Naive thymus-derived CD4-positive, alpha-beta T cell (primary cell): ENCODE measurements at regions of chr12 and their contacts with region 1.

Region 1: DNA sequence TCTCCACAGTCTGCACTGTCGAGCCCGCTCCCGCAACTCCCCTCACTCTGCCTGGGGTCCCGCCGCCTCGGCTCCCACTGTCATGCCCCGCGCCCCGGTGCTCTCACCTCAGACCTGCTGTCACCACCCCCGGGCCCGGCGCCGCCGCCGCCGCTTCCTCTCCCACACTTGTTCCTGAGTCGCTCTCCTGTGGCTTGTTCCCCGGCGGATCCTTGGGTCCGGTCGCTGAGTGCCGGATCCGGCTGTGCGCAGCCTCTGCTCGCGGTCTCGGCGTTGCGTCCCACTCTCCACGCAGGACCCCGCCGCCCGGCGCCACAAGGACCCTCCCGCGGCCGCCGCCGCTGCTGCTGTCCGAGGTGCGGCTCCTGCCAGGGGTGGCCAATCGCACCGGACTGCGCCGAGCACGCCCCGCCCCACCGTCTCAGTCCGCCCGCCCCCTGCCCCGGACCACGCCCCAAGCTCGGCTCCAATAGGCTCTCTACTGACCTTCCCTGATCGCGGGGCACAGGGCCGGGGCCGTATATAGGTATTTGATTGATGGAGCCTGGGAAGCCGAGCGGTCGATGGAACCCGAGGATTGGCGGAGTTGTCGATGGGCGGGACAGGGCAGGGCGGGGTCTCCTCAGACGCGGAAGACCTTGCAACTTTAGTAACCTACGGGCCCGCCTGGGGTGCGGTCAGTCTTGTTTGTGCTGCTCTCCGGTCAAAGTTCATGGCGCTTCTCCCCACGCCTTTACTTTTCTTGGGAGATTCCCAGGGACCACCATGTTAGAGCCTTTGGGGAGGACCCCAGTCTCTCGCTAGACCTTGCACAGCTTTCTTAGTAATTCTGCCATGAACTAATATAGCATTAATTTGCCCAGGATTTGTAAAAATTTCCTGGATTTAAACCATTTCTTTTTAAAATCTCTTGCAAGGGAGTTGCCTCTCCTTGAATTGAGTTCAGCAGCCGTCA is at the start of gene TAOK3:
- DNase-seq: peak; percentile 90 to 98 (median 96)
- ATAC-seq: peak; percentile 95
- H3K4me3 ChIP-seq: peak within 1 kb of the TSS; percentile 93
- H3K4me3 Mint-ChIP-seq: peak within 1 kb of the TSS; percentile 90 to 99 (median 93)
- H3K27ac ChIP-seq: peak within 1 kb of the TSS; percentile 78
- H3K27ac Mint-ChIP-seq: peak within 1 kb of the TSS; percentile 86 to 99 (median 93)
- H3K4me1 ChIP-seq: peaks cover 26 to 27% of the 10 kb centered on the region in 2 donors
- H3K4me1 Mint-ChIP-seq: peaks cover 34 to 63% (median 51%) of the 10 kb centered on the region in 7 donors
- H3K27me3 ChIP-seq: no peaks in the 10 kb centered on the region
- H3K27me3 Mint-ChIP-seq: peaks cover 0 to 16% (median 0%) of the 10 kb centered on the region in 5 donors
- total RNA-seq, gene TAOK3: 55.2 to 102 (median 67.3) TPM

Region 2: GRCh38 chr12:116818948-116819832 is 1553.6 kb before region 1 on chr12:
- CTCF ChIA-PET with region 1: no interaction called
- POLR2A ChIA-PET with region 1: no interaction called
- intact Hi-C with region 1: loop called in 1 of 2 experiments (anchors 5 kb)
- DNase-seq: peak; percentile 86 to 94 (median 91)
- ATAC-seq: peak; percentile 90
- H3K4me3 ChIP-seq: peak overlapping the region; percentile 99
- H3K4me3 Mint-ChIP-seq: peak overlapping the region; percentile 78 to 99 (median 94)
- H3K27ac ChIP-seq: peak overlapping the region; percentile 97
- H3K27ac Mint-ChIP-seq: peak overlapping the region; percentile 87 to 99 (median 96)
- H3K4me1 ChIP-seq: peaks cover 7 to 11% of the 10 kb centered on the region in 2 donors
- H3K4me1 Mint-ChIP-seq: peaks cover 12 to 31% (median 24%) of the 10 kb centered on the region in 7 donors
- H3K27me3 ChIP-seq: no peaks in the 10 kb centered on the region
- H3K27me3 Mint-ChIP-seq: no peaks in the 10 kb centered on the region

Region 3: DNA sequence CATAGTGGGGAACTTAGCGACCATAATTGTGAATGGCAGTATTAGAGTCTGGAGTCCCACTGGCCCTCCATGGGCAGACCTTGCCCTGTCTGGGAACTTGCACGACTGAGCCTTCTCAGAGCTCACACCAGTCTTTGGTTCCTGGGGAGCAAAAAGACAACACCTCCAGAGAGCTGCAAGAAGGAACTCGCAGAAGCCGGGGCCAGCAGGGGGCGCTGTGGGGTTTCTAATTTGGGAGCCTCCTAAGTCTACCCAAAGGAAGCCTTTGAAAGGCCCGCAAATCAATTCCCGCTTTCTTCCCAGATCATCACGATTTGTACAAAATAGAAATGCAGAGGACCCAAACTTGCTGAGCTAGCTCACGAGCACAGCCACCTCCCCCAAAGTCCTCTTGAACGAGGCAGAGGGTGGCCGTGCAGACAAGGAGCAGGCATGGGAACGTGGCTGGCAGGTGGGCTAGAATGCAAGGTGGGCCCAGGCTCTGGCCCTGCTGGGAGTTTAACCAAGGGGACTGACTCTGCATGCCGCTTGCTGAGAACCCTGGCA is 1136.3 kb before region 1 on chr12:
- CTCF ChIA-PET with region 1: no interaction called
- POLR2A ChIA-PET with region 1: no interaction called
- intact Hi-C with region 1: no loop called
- DNase-seq: peak in 8 of 9 donors; percentile 31 to 82 (median 42)
- ATAC-seq: no peak
- H3K4me3 ChIP-seq: no peak overlapping the region
- H3K4me3 Mint-ChIP-seq: peak overlapping the region in 1 of 10 donors; percentile 54
- H3K27ac ChIP-seq: no peak overlapping the region
- H3K27ac Mint-ChIP-seq: no peak overlapping the region
- H3K4me1 ChIP-seq: no peaks in the 10 kb centered on the region
- H3K4me1 Mint-ChIP-seq: no peaks in the 10 kb centered on the region
- H3K27me3 ChIP-seq: no peaks in the 10 kb centered on the region
- H3K27me3 Mint-ChIP-seq: peaks cover 1 to 28% (median 22%) of the 10 kb centered on the region in 5 donors

Region 4: GRCh38 chr12:117968826-117969659 is 403.8 kb before region 1 on chr12 and contains the start of gene KSR2:
- CTCF ChIA-PET with region 1: no interaction called
- POLR2A ChIA-PET with region 1: no interaction called
- intact Hi-C with region 1: no loop called
- DNase-seq: peak in 8 of 9 donors; percentile 5 to 59 (median 16)
- ATAC-seq: peak; percentile 68
- H3K4me3 ChIP-seq: no peak within 1 kb of the TSS
- H3K4me3 Mint-ChIP-seq: peak within 1 kb of the TSS; percentile 72 to 90 (median 82)
- H3K27ac ChIP-seq: no peak within 1 kb of the TSS
- H3K27ac Mint-ChIP-seq: peak within 1 kb of the TSS in 1 of 9 donors; percentile 31
- H3K4me1 ChIP-seq: no peaks in the 10 kb centered on the region
- H3K4me1 Mint-ChIP-seq: peaks cover 0 to 21% (median 10%) of the 10 kb centered on the region in 7 donors
- H3K27me3 ChIP-seq: no peaks in the 10 kb centered on the region
- H3K27me3 Mint-ChIP-seq: peaks cover 57 to 75% (median 65%) of the 10 kb centered on the region in 5 donors
- total RNA-seq, gene KSR2: 0.03 to 0.07 TPM in 2 of 5 experiments, not detected in the others

Region 5: DNA sequence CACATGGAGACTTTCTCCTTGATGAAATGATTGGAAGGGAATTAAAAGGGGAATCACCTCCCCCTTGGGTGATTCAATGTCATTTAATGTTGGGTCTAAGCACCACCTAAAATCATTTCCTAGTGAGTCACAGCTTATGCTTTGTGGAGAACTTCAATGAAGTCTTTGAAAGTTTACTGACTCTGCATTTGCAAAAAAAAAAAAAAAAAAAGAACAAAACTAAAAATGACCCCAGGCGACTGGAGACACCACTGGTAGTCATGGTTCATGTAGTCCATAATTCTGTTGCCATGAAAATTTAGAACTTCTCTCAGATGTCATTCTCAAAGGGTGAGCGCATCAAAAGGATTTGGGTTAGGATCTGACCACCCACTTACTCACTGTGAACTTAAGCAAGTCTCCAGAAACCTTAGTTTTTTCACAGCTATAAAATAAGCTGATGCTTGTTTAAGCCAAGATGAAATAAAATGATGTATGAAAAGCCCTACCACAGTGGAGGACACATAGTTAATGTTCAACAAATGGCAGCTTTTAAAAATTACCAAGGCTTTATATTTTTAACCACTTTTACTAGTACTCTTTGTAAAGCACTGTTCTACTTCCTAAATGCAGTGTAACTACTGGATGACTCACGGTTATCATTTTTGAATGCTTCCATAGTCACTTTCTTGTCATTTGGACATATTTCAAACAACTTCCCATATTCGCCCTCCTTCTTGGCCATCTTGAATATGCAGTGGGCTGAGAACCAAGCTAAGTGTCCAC is 385.9 kb before region 1 on chr12:
- CTCF ChIA-PET with region 1: no interaction called
- POLR2A ChIA-PET with region 1: no interaction called
- intact Hi-C with region 1: no loop called
- DNase-seq: no peak
- ATAC-seq: no peak
- H3K4me3 ChIP-seq: no peak overlapping the region
- H3K4me3 Mint-ChIP-seq: no peak overlapping the region
- H3K27ac ChIP-seq: no peak overlapping the region
- H3K27ac Mint-ChIP-seq: no peak overlapping the region
- H3K4me1 ChIP-seq: no peaks in the 10 kb centered on the region
- H3K4me1 Mint-ChIP-seq: no peaks in the 10 kb centered on the region
- H3K27me3 ChIP-seq: no peaks in the 10 kb centered on the region
- H3K27me3 Mint-ChIP-seq: peaks cover 0 to 31% (median 18%) of the 10 kb centered on the region in 5 donors

Region 6: DNA sequence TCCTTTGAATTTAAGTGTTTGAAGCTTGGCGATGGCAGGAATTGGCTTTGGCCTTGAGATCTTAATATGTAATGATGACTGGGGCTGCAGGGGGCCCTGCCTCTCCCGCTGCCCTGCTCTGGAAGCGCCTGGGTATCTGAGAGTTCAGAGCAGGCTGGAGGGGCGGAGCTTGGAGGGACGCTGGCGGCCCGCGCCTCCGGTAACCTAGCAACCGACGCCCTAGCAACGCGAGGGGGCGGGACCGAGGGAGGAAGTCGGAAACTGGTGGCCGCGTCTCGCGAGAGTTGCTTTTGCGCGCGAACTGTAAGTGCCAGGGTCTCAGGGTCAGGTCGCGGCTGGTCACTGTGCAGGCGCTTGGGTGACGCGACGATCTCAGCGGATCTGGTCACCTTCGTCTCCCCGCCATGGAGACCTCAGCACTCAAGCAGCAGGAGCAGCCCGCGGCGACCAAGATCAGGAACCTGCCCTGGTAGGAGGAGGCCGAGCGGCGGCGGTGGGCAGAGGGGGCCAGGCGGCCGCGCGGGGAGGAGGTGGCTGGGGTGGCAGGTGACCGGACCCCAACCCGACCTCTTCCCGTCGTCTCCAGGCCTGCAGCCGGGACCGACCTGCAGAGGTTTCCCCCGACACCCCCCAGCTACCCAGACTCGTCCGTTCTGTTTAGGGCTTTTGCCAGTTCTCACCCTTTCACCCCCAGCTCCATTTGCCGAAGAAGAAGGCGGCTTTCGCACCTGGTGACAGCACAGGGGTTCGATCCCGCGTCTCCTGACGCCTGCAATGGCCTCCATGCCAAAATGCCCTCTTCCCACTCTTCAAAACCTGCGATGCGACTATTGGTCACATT is 356.2 kb before region 1 on chr12 and contains the start of gene RFC5:
- CTCF ChIA-PET with region 1: no interaction called
- POLR2A ChIA-PET with region 1: no interaction called
- intact Hi-C with region 1: loop called (anchors 1 kb)
- DNase-seq: peak; percentile 93 to 98 (median 97)
- ATAC-seq: peak; percentile 99
- H3K4me3 ChIP-seq: peak within 1 kb of the TSS; percentile 80
- H3K4me3 Mint-ChIP-seq: peak within 1 kb of the TSS; percentile 89 to 95 (median 92)
- H3K27ac ChIP-seq: peak within 1 kb of the TSS; percentile 69
- H3K27ac Mint-ChIP-seq: peak within 1 kb of the TSS; percentile 82 to 95 (median 92)
- H3K4me1 ChIP-seq: peaks cover 10 to 13% of the 10 kb centered on the region in 2 donors
- H3K4me1 Mint-ChIP-seq: peaks cover 11 to 29% (median 18%) of the 10 kb centered on the region in 7 donors
- H3K27me3 ChIP-seq: no peaks in the 10 kb centered on the region
- H3K27me3 Mint-ChIP-seq: peaks cover 0 to 7% (median 0%) of the 10 kb centered on the region in 5 donors
- total RNA-seq, gene RFC5: 6.3 to 40.3 (median 15.6) TPM

Region 7: GRCh38 chr12:118183705-118184104 is 189.1 kb before region 1 on chr12:
- CTCF ChIA-PET with region 1: interaction called, 21 read pairs
- POLR2A ChIA-PET with region 1: interaction called, 9 read pairs
- intact Hi-C with region 1: loop called (anchors 1 kb)
- DNase-seq: no peak
- ATAC-seq: no peak
- H3K4me3 ChIP-seq: no peak overlapping the region
- H3K4me3 Mint-ChIP-seq: no peak overlapping the region
- H3K27ac ChIP-seq: no peak overlapping the region
- H3K27ac Mint-ChIP-seq: peak overlapping the region in 1 of 9 donors; percentile 58
- H3K4me1 ChIP-seq: no peaks in the 10 kb centered on the region
- H3K4me1 Mint-ChIP-seq: peaks cover 7 to 33% (median 16%) of the 10 kb centered on the region in 7 donors
- H3K27me3 ChIP-seq: no peaks in the 10 kb centered on the region
- H3K27me3 Mint-ChIP-seq: no peaks in the 10 kb centered on the region

Region 8: GRCh38 chr12:118357257-118358007 is 15.4 kb before region 1 on chr12:
- CTCF ChIA-PET with region 1: interaction called, 50 read pairs
- POLR2A ChIA-PET with region 1: interaction called, 49 read pairs
- intact Hi-C with region 1: loop called (anchors 1 kb)
- DNase-seq: peak in 8 of 9 donors; percentile 9 to 67 (median 62)
- ATAC-seq: peak; percentile 81
- H3K4me3 ChIP-seq: peak overlapping the region; percentile 58
- H3K4me3 Mint-ChIP-seq: peak overlapping the region; percentile 73 to 98 (median 86)
- H3K27ac ChIP-seq: peak overlapping the region; percentile 66
- H3K27ac Mint-ChIP-seq: peak overlapping the region; percentile 33 to 96 (median 79)
- H3K4me1 ChIP-seq: peaks cover 21 to 29% of the 10 kb centered on the region in 2 donors
- H3K4me1 Mint-ChIP-seq: peaks cover 34 to 69% (median 59%) of the 10 kb centered on the region in 7 donors
- H3K27me3 ChIP-seq: no peaks in the 10 kb centered on the region
- H3K27me3 Mint-ChIP-seq: no peaks in the 10 kb centered on the region

Region 9: GRCh38 chr12:118884226-118884625 is 511.4 kb after region 1 on chr12:
- CTCF ChIA-PET with region 1: no interaction called
- POLR2A ChIA-PET with region 1: no interaction called
- intact Hi-C with region 1: no loop called
- DNase-seq: no peak
- ATAC-seq: no peak
- H3K4me3 ChIP-seq: no peak overlapping the region
- H3K4me3 Mint-ChIP-seq: no peak overlapping the region
- H3K27ac ChIP-seq: no peak overlapping the region
- H3K27ac Mint-ChIP-seq: no peak overlapping the region
- H3K4me1 ChIP-seq: no peaks in the 10 kb centered on the region
- H3K4me1 Mint-ChIP-seq: no peaks in the 10 kb centered on the region
- H3K27me3 ChIP-seq: no peaks in the 10 kb centered on the region
- H3K27me3 Mint-ChIP-seq: peaks cover 0 to 13% (median 1%) of the 10 kb centered on the region in 5 donors

Region 10: GRCh38 chr12:119988782-119989668 is 1616.2 kb after region 1 on chr12 and contains the start of gene BICDL1:
- CTCF ChIA-PET with region 1: no interaction called
- POLR2A ChIA-PET with region 1: no interaction called
- intact Hi-C with region 1: loop called in 1 of 2 experiments (anchors 1 kb)
- DNase-seq: peak; percentile 95 to 99 (median 98)
- ATAC-seq: peak; percentile 93
- H3K4me3 ChIP-seq: peak within 1 kb of the TSS; percentile 68
- H3K4me3 Mint-ChIP-seq: peak within 1 kb of the TSS; percentile 78 to 95 (median 87)
- H3K27ac ChIP-seq: peak within 1 kb of the TSS; percentile 90
- H3K27ac Mint-ChIP-seq: peak within 1 kb of the TSS; percentile 69 to 98 (median 93)
- H3K4me1 ChIP-seq: peaks cover 18 to 19% of the 10 kb centered on the region in 2 donors
- H3K4me1 Mint-ChIP-seq: peaks cover 18 to 46% (median 38%) of the 10 kb centered on the region in 7 donors
- H3K27me3 ChIP-seq: no peaks in the 10 kb centered on the region
- H3K27me3 Mint-ChIP-seq: peaks cover 0 to 9% (median 0%) of the 10 kb centered on the region in 5 donors
- total RNA-seq, gene BICDL1: 75.8 to 156 (median 143) TPM